PC-3 (cell line): ENCODE measurements at regions of chr6 and their contacts with region 1.

Region 1: GRCh38 chr6:127302728-127303660 is 36.3 kb downstream of the RNF146 start:
- DNase-seq: peak; percentile 74
- ATAC-seq: no peak
- H3K4me3 ChIP-seq: no peak overlapping the region
- H3K27ac ChIP-seq: no peak overlapping the region
- H3K4me1 ChIP-seq: peaks cover 8% of the 10 kb centered on the region; the same call in 1 of the 2 replicates
- H3K27me3 ChIP-seq: no peaks in the 10 kb centered on the region
- CTCF ChIP-seq: peak; percentile 68

Region 2: DNA sequence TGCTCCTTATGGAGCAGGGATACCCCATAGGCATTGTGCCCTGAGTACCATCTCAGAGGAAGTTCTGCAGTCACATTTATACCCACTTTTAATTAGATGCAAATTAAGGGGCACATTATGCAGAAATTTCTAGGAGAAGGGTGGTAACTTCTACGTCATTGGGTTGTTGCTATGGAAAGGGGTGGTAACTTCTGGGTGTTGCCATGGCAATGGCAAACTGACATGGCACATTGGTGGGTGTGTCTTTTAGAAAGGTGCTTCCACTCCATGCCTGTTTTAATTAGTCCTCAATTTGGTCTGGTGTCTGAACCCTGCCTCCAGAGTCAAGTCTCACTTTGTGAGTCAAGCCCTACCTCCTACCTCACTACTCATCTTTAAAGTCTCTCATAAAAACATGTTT is 142.5 kb before region 1 on chr6:
- CTCF ChIA-PET with region 1: no interaction called
- POLR2A ChIA-PET with region 1: no interaction called
- intact Hi-C with region 1: no loop called
- DNase-seq: no peak
- ATAC-seq: no peak
- H3K4me3 ChIP-seq: no peak overlapping the region
- H3K27ac ChIP-seq: no peak overlapping the region
- H3K4me1 ChIP-seq: no peaks in the 10 kb centered on the region
- H3K27me3 ChIP-seq: peaks cover 18% of the 10 kb centered on the region
- CTCF ChIP-seq: no peak

Region 3: DNA sequence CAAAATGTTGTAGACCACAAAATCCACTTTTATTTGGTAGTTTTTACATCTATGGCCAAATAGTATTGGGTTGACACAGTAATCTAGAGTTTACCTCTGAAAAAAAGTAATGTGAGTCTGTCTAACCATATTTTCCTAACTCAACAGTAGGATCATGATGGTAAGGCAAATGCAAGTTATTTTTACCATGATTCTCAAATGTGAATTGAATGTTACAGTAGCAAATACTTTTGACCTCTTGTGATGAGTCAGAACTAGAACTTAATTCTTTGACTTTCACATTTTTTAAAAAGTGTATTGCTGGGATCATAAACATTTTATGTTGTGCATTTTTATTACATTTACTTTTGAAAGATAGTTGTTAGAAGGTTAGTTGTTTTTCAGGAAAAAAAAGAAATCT is 14.3 kb before region 1 on chr6:
- CTCF ChIA-PET with region 1: no interaction called
- POLR2A ChIA-PET with region 1: no interaction called
- intact Hi-C with region 1: no loop called
- DNase-seq: no peak
- ATAC-seq: no peak
- H3K4me3 ChIP-seq: no peak overlapping the region
- H3K27ac ChIP-seq: no peak overlapping the region
- H3K4me1 ChIP-seq: no peaks in the 10 kb centered on the region
- H3K27me3 ChIP-seq: no peaks in the 10 kb centered on the region
- CTCF ChIP-seq: no peak

Region 4: GRCh38 chr6:127342946-127343808 is 40.2 kb after region 1 on chr6 and contains the start of gene ECHDC1:
- CTCF ChIA-PET with region 1: no interaction called
- POLR2A ChIA-PET with region 1: no interaction called
- intact Hi-C with region 1: loop called (anchors 2 kb)
- DNase-seq: peak; percentile 65
- ATAC-seq: peak; percentile 63
- H3K4me3 ChIP-seq: peak within 1 kb of the TSS; percentile 94
- H3K27ac ChIP-seq: peak within 1 kb of the TSS; percentile 80
- H3K4me1 ChIP-seq: peaks cover 58% of the 10 kb centered on the region
- H3K27me3 ChIP-seq: no peaks in the 10 kb centered on the region
- CTCF ChIP-seq: no peak
- total RNA-seq, gene ECHDC1: 24.2 and 34.5 TPM in 2 replicates

Region 5: GRCh38 chr6:127464881-127465459 is 162.0 kb after region 1 on chr6:
- CTCF ChIA-PET with region 1: no interaction called
- POLR2A ChIA-PET with region 1: no interaction called
- intact Hi-C with region 1: loop called (anchors 2 kb)
- DNase-seq: peak; percentile 65
- ATAC-seq: peak; percentile 85
- H3K4me3 ChIP-seq: no peak overlapping the region
- H3K27ac ChIP-seq: no peak overlapping the region
- H3K4me1 ChIP-seq: no peaks in the 10 kb centered on the region
- H3K27me3 ChIP-seq: no peaks in the 10 kb centered on the region
- CTCF ChIP-seq: peak; percentile 83

Region 6: GRCh38 chr6:127539272-127539671 is 236.3 kb after region 1 on chr6:
- CTCF ChIA-PET with region 1: no interaction called
- POLR2A ChIA-PET with region 1: no interaction called
- intact Hi-C with region 1: loop called (anchors 2 kb)
- DNase-seq: peak; percentile 34
- ATAC-seq: peak; percentile 35
- H3K4me3 ChIP-seq: no peak overlapping the region
- H3K27ac ChIP-seq: no peak overlapping the region
- H3K4me1 ChIP-seq: no peaks in the 10 kb centered on the region
- H3K27me3 ChIP-seq: no peaks in the 10 kb centered on the region
- CTCF ChIP-seq: peak; percentile 52; the same call in 1 of the 2 replicates